Motor neuron (in vitro differentiated cells): ENCODE measurements at regions of chr4 and their contacts with region 1.

Region 1: DNA sequence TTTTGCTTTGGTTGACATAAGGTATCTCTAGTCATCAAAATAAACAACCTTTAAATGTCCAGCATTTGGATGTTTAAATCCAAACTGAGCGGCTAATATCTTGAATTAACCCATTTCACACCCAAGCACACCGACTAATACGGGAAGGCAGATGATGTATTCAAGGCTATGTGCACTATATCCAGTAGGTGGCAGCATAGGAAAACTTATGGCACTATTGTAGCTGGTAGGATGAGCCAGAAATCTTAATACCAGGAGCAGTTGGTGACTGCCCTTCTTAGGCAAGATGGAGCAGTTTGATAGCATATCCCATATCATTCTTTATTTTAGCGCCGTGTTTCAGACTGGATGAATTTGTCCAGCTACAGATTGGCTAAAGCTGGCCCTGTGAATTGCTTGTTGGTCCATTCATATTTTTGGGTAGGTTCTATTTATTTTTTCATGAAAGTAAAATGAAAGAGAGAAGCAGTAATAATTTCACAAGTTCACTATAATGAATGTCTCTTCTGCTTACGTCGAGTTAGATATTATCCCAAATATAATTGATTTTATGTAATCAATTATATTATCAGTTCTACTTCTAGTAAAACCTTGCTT is 24.4 kb downstream of the UCHL1 start:
- ATAC-seq: peak; percentile 95 to 99 (median 98)
- H3K4me3 ChIP-seq: no peak overlapping the region
- H3K27ac ChIP-seq: no peak overlapping the region
- H3K4me1 ChIP-seq: peaks cover 0 to 10% of the 10 kb centered on the region in 2 donors

Region 2: DNA sequence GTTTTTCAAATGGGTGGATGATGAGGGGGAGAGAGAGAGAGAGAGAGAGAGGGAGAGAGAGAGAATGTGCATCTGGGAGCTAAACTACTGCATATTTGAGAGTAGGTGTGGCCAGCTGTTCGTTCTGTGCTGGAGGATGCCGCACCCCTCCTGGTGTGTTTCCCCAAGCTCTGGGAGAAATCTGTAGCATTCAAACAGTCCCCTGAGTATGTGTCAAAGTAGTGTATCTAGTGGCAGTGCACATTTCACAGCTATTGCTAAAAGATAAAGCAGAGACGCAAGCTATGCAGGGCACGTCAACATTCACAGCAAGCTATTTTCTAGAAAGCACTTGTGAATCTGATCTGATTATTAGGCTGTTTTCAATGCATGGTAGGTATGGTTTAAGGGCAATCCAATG is 173.3 kb after region 1 on chr4:
- in situ Hi-C with region 1: loop called in 1 of 9 experiments (anchors 25 kb)
- ATAC-seq: peak; percentile 72 to 88 (median 82)
- H3K4me3 ChIP-seq: no peak overlapping the region
- H3K27ac ChIP-seq: no peak overlapping the region
- H3K4me1 ChIP-seq: peaks cover 31 to 37% of the 10 kb centered on the region in 2 donors

Region 3: DNA sequence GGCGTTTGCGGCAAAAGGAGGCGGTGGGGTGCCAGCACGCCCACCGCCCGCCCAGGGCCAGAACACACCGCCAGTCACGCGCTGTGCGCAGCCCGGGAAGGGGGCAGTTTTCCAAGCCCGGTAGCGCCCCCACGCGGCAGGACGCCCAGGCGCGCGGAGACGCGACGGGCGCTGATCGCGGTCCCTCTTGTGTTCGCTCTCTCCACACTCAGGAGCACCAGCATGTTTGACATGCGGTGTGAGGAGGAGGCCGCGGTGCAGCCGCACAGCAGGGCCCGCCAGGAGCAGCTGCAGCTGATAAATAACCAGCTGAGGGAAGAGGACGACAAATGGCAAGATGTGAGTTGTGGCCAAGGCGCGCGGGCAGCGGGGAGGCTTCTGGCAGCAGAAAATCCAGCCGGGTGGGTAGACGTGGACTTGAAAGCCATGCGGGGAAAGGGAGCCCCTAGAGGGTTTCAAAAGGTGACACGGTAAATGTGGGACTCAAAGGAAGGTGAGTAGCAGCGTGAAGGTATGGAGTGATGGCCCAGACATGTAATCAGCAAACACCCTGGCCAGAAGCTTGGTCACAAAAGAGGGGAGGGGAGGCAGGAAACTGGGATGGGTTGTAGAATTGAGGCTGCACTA is 363.3 kb after region 1 on chr4:
- in situ Hi-C with region 1: loop called in 3 of 9 experiments (anchors 10 to 25 kb)
- ATAC-seq: peak; percentile 32 to 100 (median 100)
- H3K4me3 ChIP-seq: no peak overlapping the region
- H3K27ac ChIP-seq: no peak overlapping the region
- H3K4me1 ChIP-seq: peaks cover 14 to 18% of the 10 kb centered on the region in 2 donors

Region 4: DNA sequence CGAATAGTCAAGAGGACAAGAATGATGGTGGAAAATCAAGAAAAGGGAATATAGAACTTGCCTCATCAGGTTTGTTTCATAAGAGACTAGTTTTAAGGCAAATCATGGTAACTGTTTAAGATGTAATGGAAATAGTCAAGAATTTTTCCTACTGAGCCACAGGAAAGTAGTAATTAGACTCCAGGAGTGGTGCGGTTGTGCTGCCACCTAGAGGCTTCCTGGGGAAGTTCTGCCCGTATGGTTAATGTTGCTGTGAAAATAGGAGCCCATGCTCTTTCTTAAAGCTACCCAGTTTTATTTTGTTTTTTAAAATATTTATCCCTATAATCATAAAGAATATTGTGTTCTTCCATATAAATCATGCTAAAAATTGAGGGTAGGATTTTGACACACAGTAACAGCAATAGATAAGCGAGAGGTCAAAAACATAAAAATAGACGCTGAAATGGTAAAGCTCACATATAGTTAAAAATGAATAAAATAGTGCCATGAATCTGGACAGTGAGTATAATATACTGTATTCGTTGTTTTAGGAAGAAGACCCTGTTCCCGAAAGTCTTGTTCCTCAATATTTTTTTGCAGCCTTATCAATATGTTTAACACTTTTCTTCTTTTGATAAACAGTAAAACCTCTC is 380.4 kb after region 1 on chr4:
- in situ Hi-C with region 1: loop called in 3 of 9 experiments (anchors 10 to 25 kb)
- ATAC-seq: peak in 7 of 8 experiments; percentile 8 to 66 (median 48)
- H3K4me3 ChIP-seq: no peak overlapping the region
- H3K27ac ChIP-seq: no peak overlapping the region
- H3K4me1 ChIP-seq: no peaks in the 10 kb centered on the region

Region 5: DNA sequence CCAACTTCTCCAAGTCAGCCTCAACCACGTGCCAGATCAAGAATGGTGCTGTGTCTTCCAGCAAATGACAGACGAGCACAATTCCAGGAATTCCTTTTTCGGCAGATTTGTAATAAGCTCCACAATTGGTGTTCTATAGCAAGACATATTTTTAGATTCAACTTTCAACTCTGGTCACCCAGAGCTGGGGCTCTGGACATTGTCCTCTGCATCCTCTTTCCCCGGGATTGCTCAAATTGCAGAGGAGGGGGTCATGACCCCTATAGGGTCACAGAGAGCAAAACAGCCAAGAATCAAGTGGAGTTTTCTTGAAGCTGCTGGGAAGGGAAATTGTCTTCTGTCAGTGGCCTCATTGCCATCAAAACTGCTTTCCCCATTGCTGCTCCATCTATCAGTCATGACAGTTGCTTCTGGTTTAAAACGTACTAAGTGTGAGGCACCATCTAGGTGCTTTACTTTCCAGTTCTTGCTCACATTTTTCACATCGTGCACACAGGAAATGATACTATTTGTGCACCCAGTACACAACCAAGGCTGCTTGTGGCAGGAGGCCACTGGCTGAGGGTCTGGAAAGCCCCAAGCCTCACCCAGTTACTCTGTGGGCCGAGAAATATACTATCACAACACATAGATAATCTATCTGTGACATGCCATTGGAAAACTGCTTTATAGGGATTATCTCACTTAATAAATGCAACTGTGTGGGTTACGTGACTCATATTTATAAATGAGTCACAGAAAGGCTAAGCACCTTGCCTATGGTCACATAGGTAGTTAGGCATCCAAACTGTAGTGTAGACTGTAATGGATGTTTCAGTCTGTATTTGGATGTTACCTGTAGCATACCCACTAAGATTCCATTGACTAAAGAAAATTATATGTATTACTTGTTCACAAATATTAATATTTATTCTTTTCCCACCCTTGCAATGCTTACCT is 559.0 kb after region 1 on chr4:
- in situ Hi-C with region 1: no loop called
- ATAC-seq: peak in 1 of 8 experiments; percentile 28
- H3K4me3 ChIP-seq: no peak overlapping the region
- H3K27ac ChIP-seq: no peak overlapping the region
- H3K4me1 ChIP-seq: no peaks in the 10 kb centered on the region

Region 6: GRCh38 chr4:41882625-41883347 is 601.6 kb after region 1 on chr4:
- in situ Hi-C with region 1: loop called in 4 of 9 experiments (anchors 25 kb)
- ATAC-seq: peak; percentile 54 to 75 (median 67)
- H3K4me3 ChIP-seq: peak overlapping the region in 3 of 5 donors; percentile 29 to 37 (median 35)
- H3K27ac ChIP-seq: no peak overlapping the region
- H3K4me1 ChIP-seq: peaks cover 26 to 27% of the 10 kb centered on the region in 2 donors